Dorsolateral prefrontal cortex (tissue), 120 donors: ENCODE measurements at regions of chr9 and their contacts with region 1.

Region 1: DNA sequence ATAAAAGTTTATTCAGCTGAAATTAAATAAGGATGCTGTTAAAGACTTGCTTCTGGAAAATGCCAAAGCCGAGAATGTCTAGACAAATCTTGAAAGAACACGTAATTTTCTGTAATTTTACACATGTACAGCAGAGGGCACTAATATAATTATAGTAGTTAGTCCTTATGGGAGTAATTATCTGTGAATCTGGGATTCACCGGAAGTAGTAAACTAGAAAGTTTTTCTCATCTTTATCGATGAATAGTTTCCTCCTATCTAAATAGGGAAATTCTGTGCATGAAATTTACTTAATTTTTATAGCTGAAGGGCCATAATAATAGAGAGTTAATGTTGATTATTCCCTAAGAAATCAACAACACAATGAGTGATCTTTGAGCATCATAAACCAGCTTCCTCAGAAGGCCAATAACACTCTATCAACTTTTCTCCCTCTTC is 18.4 kb upstream of the CNTLN start:
- DNase-seq: no peak
- H3K4me3 ChIP-seq: no peak overlapping the region
- H3K27ac ChIP-seq: no peak overlapping the region
- H3K27me3 ChIP-seq: peaks cover 0 to 7% (median 0%) of the 10 kb centered on the region in 45 donors
- CTCF ChIP-seq: peak in 55 of 56 donors; percentile 37 to 86 (median 64)

Region 2: GRCh38 chr9:16964228-16964627 is 152.2 kb before region 1 on chr9:
- intact Hi-C with region 1: no loop called
- DNase-seq: no peak
- H3K4me3 ChIP-seq: no peak overlapping the region
- H3K27ac ChIP-seq: no peak overlapping the region
- H3K27me3 ChIP-seq: no peaks in the 10 kb centered on the region
- CTCF ChIP-seq: no peak

Region 3: GRCh38 chr9:17462869-17463464 is 346.5 kb after region 1 on chr9:
- intact Hi-C with region 1: loop called (anchors 2 to 5 kb)
- DNase-seq: peak in 2 of 10 donors; percentile 28 to 51
- H3K4me3 ChIP-seq: no peak overlapping the region
- H3K27ac ChIP-seq: no peak overlapping the region
- H3K27me3 ChIP-seq: no peaks in the 10 kb centered on the region
- CTCF ChIP-seq: peak; percentile 64 to 97 (median 86)